ENCODE measurements at regions of chr10 and their contacts with region 1.

Region 1: DNA sequence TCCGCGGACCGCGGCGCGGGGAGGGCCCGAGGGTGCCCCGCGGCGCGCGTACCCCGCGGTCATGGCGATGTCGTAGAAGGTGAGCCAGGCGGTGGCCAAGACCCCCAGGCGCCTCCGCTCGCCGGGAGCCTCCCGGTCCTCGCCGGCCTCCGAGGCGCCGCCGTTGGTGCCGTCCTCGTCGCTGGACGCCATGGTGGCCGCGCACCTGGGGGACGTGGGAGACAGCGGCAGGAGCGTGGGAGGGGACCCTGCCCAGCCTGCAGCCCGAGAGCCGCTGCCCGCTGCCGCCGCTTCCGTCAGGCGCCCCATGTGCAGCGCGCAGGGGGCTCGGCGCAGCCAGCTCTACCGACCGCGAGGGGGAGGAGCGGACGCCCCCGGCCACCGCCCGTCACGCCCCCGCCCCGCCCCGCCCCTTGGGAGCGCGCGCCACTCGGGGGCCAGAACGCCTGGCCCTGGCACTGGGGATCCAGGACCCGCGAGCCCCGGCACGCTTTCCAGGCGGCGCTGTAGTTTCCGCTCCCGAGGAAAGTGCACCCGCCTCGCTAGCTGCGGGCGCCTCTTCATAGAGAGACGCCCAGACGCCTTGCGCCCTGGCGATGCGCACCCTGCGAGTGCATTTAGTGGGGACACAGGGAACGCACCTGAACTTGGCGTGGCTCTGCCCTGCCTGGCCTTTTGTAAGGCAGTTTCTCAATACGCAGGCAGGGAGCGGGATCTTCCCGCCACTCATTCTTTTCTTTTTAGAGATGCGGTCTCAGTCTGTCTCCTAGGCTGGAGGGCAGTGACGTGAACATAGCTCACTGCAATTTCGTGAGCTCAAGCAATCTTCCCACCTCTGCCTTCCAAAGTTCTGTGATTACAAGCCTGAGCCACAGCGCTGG is at the start of gene HACD1:
- DNase-seq: peak; percentile 98
- H3K4me3 ChIP-seq: peak within 1 kb of the TSS; percentile 66 to 84
- H3K27ac ChIP-seq: peak within 1 kb of the TSS; percentile 60 to 72
- H3K4me1 ChIP-seq: no peaks in the 10 kb centered on the region
- H3K27me3 ChIP-seq: no peaks in the 10 kb centered on the region
- CTCF ChIP-seq: peak; percentile 35
- EP300 ChIP-seq: no peak
- RAD21 ChIP-seq: peak; percentile 25; the same call in 1 of the 2 replicates
- polyA plus RNA-seq, gene HACD1: 23.9 and 31.7 TPM in 2 replicates

Region 2: GRCh38 chr10:17643755-17644484 is 26.6 kb after region 1 on chr10 and contains the start of gene STAM:
- CTCF ChIA-PET with region 1: interaction called, 3 read pairs
- POLR2A ChIA-PET with region 1: interaction called, 32 read pairs
- DNase-seq: peak; percentile 88
- H3K4me3 ChIP-seq: peak within 1 kb of the TSS; percentile 83 to 94
- H3K27ac ChIP-seq: peak within 1 kb of the TSS; percentile 94 to 99
- H3K4me1 ChIP-seq: peaks cover 12 to 14% of the 10 kb centered on the region in 2 experiments; a peak in 3 of 4 replicates
- H3K27me3 ChIP-seq: no peaks in the 10 kb centered on the region
- CTCF ChIP-seq: no peak
- EP300 ChIP-seq: no peak; a peak in 1 of 4 replicates
- RAD21 ChIP-seq: no peak
- polyA plus RNA-seq, gene STAM: 19.1 and 23.9 TPM in 2 replicates

Region 3: GRCh38 chr10:17742918-17743317 is 125.6 kb after region 1 on chr10:
- CTCF ChIA-PET with region 1: interaction called, 10 read pairs
- POLR2A ChIA-PET with region 1: no interaction called
- DNase-seq: peak; percentile 49
- H3K4me3 ChIP-seq: peak overlapping the region in 1 of 2 experiments; percentile 7; a peak in 1 of 4 replicates
- H3K27ac ChIP-seq: no peak overlapping the region
- H3K4me1 ChIP-seq: no peaks in the 10 kb centered on the region
- H3K27me3 ChIP-seq: no peaks in the 10 kb centered on the region
- CTCF ChIP-seq: peak; percentile 91
- EP300 ChIP-seq: no peak
- RAD21 ChIP-seq: peak; percentile 63